SK-N-SH (cell line): ENCODE measurements at regions of chr17 and their contacts with region 1.

Region 1: GRCh38 chr17:66964930-66965800 is 658 bp downstream of the CACNG4 start:
- DNase-seq: peak; percentile 99
- H3K4me3 ChIP-seq: peak overlapping the region; percentile 50 to 93
- H3K27ac ChIP-seq: peak overlapping the region; percentile 24 to 97; a peak in 3 of 4 replicates
- H3K4me1 ChIP-seq: peaks cover 0 to 64% of the 10 kb centered on the region in 2 experiments; a peak in 2 of 4 replicates
- H3K27me3 ChIP-seq: no peaks in the 10 kb centered on the region
- CTCF ChIP-seq: no peak
- EP300 ChIP-seq: no peak
- RAD21 ChIP-seq: no peak

Region 2: DNA sequence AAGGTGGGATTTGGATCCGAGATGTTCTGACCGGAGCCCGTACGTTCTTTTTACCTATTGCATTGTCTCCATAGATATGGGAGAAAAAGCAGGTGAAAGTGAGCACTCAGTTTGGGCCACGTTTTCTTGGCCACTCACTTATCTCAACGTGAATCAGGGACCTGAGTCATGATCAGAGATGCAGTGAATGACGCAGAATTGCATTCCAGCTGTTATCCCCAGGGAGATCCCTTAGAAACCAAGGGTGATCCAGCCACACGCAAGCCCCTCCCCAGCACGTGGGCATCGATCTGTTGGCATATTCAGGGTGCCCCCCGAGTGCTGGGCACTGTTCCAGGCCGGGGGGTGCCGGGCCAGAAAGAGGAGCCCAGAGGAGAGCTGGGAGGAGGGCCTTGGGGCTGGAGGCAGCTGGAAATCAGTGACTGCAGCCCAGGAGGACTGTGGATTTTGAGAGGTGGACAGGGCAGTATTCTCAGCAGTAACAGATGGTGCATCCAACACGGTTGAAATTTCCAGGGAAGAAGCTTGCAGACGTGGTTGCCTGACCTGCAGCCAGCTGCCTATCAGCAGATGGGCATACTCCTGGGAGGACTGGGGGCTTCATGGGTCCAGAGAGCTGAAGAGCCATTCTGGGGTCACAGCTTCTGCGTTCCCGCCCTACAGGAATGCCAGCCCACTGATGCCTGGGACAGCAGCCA is 217.4 kb before region 1 on chr17:
- CTCF ChIA-PET with region 1: no interaction called
- POLR2A ChIA-PET with region 1: no interaction called
- DNase-seq: no peak
- H3K4me3 ChIP-seq: no peak overlapping the region
- H3K27ac ChIP-seq: no peak overlapping the region; a peak in 1 of 4 replicates
- H3K4me1 ChIP-seq: peaks cover 0 to 5% of the 10 kb centered on the region in 2 experiments; a peak in 1 of 4 replicates
- H3K27me3 ChIP-seq: no peaks in the 10 kb centered on the region
- CTCF ChIP-seq: no peak
- EP300 ChIP-seq: no peak
- RAD21 ChIP-seq: no peak

Region 3: DNA sequence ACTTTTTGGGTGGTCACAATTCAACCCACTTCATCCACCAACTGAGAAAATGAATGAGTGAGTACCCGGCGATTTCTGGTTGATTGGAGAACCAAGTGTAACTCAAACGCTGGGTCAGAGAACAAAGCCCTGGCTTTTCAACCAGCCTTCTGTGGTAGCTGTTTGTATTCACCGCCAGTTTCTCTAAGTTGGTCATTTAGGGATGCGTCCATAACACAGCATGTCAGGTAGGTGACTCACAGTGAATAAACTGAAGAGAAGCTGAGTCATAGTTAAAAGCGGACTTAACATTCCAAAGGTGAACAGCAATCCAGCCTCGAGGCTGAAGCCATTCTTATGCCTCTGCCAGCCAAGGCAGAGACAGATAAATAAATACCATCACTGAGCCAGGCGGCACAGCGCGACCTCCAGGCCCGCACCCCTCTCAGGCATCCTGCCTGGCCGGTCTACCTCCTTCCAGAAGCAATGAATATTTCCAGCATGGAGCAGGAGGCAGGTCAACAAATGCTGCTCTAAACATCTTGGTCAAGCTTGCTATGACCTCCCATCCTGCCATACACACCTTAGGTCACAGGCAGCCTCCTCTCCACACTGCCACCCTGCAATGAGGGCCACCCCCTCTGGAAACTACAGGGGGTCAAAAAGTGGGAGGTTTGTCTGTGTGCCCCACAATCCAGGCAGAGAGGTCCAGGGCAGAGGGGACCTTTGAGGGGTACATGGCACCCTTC is 13.1 kb before region 1 on chr17:
- CTCF ChIA-PET with region 1: interaction called, 4 read pairs
- POLR2A ChIA-PET with region 1: interaction called, 41 read pairs
- DNase-seq: no peak
- H3K4me3 ChIP-seq: no peak overlapping the region; a peak in 1 of 4 replicates
- H3K27ac ChIP-seq: peak overlapping the region; percentile 85 to 96
- H3K4me1 ChIP-seq: peaks cover 16 to 54% of the 10 kb centered on the region in 2 experiments
- H3K27me3 ChIP-seq: no peaks in the 10 kb centered on the region
- CTCF ChIP-seq: no peak
- EP300 ChIP-seq: peak in 1 of 2 experiments; percentile 91; a peak in 2 of 4 replicates
- RAD21 ChIP-seq: no peak

Region 4: GRCh38 chr17:66975604-66976384 is 10.6 kb after region 1 on chr17:
- CTCF ChIA-PET with region 1: interaction called, 5 read pairs
- POLR2A ChIA-PET with region 1: interaction called, 19 read pairs
- DNase-seq: no peak
- H3K4me3 ChIP-seq: no peak overlapping the region
- H3K27ac ChIP-seq: peak overlapping the region in 1 of 2 experiments; percentile 95; a peak in 2 of 4 replicates
- H3K4me1 ChIP-seq: peaks cover 5 to 80% of the 10 kb centered on the region in 2 experiments; a peak in 3 of 4 replicates
- H3K27me3 ChIP-seq: no peaks in the 10 kb centered on the region
- CTCF ChIP-seq: peak; percentile 51
- EP300 ChIP-seq: 0 out of 4 replicates have a peak, but pooled peaks of 1 of the 2 experiments have one; percentile 1
- RAD21 ChIP-seq: peak; percentile 65

Region 5: DNA sequence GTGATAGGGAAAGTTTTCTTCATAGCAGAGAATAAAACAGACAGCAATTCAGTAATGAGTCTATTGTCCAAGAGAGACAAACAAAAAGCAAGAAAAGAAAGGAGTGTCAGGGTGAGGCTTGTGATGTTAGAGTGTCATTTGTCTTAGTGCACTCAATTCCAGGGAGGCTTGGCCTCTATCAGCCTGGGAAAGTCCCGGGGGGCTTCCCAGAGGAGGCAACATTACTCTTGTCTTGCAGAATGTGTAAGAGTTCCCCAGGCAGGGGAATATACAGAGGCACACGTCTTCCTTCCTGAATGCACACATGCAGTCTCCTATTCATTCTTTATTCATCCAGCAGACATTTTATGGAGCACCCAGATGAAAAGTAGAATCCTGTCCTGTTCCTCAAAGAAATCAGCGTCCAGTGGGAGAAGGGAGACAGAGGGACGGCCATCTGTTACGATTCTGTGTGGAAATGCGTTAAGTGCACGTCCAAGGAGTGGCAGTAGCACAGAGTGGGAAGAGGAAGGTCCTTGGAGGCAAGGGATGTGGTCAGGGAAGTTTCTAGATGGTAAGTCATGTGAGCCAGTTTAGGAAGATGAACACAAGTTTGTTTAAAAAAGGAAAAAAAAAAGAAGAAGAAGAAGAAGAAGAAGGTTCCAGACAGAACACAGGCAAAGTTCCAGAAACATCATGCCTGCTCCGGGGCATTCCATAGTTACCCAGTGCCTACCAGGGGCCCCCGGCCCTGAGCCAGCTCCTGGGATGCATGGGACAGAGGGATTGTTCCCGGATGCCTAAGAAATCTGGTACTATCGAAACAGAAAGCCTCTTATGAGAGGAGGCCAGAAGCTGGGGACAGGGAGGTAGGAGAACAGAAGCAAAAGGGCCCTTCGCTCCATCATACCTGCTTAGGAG is 20.4 kb after region 1 on chr17:
- CTCF ChIA-PET with region 1: interaction called, 6 read pairs
- POLR2A ChIA-PET with region 1: interaction called, 19 read pairs
- DNase-seq: no peak
- H3K4me3 ChIP-seq: no peak overlapping the region
- H3K27ac ChIP-seq: peak overlapping the region in 1 of 2 experiments; percentile 98; a peak in 2 of 4 replicates
- H3K4me1 ChIP-seq: peaks cover 0 to 71% of the 10 kb centered on the region in 2 experiments; a peak in 2 of 4 replicates
- H3K27me3 ChIP-seq: no peaks in the 10 kb centered on the region
- CTCF ChIP-seq: no peak
- EP300 ChIP-seq: no peak; a peak in 1 of 4 replicates
- RAD21 ChIP-seq: no peak

Region 6: GRCh38 chr17:66995944-66996343 is 30.8 kb after region 1 on chr17:
- CTCF ChIA-PET with region 1: no interaction called
- POLR2A ChIA-PET with region 1: interaction called, 16 read pairs
- DNase-seq: no peak
- H3K4me3 ChIP-seq: no peak overlapping the region
- H3K27ac ChIP-seq: peak overlapping the region in 1 of 2 experiments; percentile 36; a peak in 1 of 4 replicates
- H3K4me1 ChIP-seq: peaks cover 0 to 35% of the 10 kb centered on the region in 2 experiments; a peak in 2 of 4 replicates
- H3K27me3 ChIP-seq: no peaks in the 10 kb centered on the region
- CTCF ChIP-seq: no peak
- EP300 ChIP-seq: peak in 1 of 2 experiments; percentile 10; a peak in 1 of 4 replicates
- RAD21 ChIP-seq: no peak

Region 7: DNA sequence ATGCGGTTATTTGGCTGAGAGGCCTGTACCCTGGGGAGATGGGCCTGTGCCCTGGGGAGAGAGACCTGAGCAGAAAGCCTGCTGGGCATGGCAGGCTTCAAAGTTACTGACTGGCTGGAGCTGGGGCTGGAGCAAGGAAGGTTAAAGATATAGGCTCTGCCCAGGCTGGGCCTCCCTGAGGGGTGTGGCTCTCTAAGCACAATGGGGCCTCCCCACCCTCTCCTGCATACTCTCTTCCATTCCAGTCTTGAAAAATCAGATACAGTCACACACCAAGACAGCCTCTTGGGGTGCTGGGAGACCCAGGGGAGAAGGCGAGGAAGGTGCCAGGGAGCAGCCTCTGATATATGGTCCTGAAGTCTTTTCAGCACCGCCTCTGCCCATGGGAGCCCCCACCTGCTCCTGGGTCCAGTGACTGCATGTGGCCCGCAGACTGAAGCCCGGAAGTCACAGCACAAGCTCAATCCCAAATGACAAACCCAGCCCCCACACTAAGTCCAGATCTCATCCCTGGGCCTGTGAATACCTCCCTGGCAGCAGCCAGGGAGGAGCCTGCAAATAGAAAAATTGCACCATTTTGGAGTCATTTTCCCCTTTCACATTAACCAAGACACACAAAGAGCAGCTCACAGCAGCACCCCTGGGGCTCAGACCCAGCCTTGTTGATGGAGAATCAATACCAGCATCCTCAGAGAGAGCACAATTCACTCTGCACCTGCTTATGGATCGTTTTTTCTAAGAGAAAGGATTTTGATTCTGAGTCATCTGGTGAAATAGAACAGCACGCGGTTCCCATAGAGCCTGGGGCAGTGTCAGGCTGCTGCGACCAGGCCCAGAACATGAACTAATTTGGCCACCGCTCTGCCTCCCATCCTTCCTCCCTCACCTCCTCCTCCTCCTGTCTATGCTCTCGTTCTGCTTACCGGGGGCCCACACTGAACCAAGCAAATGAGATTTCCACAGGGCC is 53.6 kb after region 1 on chr17:
- CTCF ChIA-PET with region 1: interaction called, 25 read pairs
- POLR2A ChIA-PET with region 1: interaction called, 125 read pairs
- DNase-seq: peak; percentile 75
- H3K4me3 ChIP-seq: no peak overlapping the region
- H3K27ac ChIP-seq: peak overlapping the region in 1 of 2 experiments; percentile 99; a peak in 2 of 4 replicates
- H3K4me1 ChIP-seq: peaks cover 0 to 83% of the 10 kb centered on the region in 2 experiments; a peak in 2 of 4 replicates
- H3K27me3 ChIP-seq: no peaks in the 10 kb centered on the region
- CTCF ChIP-seq: no peak
- EP300 ChIP-seq: peak in 1 of 2 experiments; percentile 86; a peak in 2 of 4 replicates
- RAD21 ChIP-seq: peak; percentile 21; the same call in 1 of the 2 replicates

Region 8: DNA sequence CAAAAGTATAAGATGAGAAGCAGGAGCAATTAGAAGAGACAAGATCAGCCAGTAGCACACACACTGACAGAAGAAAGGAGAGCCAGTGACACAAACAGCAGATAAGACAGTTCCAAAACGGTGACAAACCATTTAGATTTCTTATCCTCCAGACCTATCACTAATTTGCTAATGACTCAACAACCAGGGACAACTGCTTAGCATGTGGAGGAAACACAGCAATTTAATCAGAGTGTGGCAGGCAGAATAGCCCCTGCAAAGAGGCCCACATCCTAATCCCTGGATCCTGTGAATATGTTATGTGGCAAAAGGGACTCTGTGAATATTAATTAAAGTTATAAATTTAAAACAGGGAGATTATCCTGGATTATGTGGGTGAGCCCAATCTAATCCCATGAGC is 160.3 kb after region 1 on chr17:
- CTCF ChIA-PET with region 1: interaction called, 10 read pairs
- POLR2A ChIA-PET with region 1: interaction called, 32 read pairs
- DNase-seq: peak; percentile 71
- H3K4me3 ChIP-seq: no peak overlapping the region
- H3K27ac ChIP-seq: peak overlapping the region; percentile 29 to 99; a peak in 3 of 4 replicates
- H3K4me1 ChIP-seq: peaks cover 4 to 47% of the 10 kb centered on the region in 2 experiments; a peak in 3 of 4 replicates
- H3K27me3 ChIP-seq: no peaks in the 10 kb centered on the region
- CTCF ChIP-seq: no peak
- EP300 ChIP-seq: peak; percentile 34 to 100; a peak in 3 of 4 replicates
- RAD21 ChIP-seq: peak; percentile 52

Region 9: GRCh38 chr17:67615011-67615561 is 649.9 kb after region 1 on chr17:
- CTCF ChIA-PET with region 1: no interaction called
- POLR2A ChIA-PET with region 1: no interaction called
- DNase-seq: no peak
- H3K4me3 ChIP-seq: no peak overlapping the region
- H3K27ac ChIP-seq: no peak overlapping the region
- H3K4me1 ChIP-seq: peaks cover 0 to 3% of the 10 kb centered on the region in 2 experiments; a peak in 1 of 4 replicates
- H3K27me3 ChIP-seq: no peaks in the 10 kb centered on the region
- CTCF ChIP-seq: peak; percentile 7; the same call in 1 of the 2 replicates
- EP300 ChIP-seq: no peak
- RAD21 ChIP-seq: no peak